Activated B cell treated with CpG ODN at 0.5 μM for 24 hours (primary cell): ENCODE measurements at regions of chr14 and their contacts with region 1.

Region 1: DNA sequence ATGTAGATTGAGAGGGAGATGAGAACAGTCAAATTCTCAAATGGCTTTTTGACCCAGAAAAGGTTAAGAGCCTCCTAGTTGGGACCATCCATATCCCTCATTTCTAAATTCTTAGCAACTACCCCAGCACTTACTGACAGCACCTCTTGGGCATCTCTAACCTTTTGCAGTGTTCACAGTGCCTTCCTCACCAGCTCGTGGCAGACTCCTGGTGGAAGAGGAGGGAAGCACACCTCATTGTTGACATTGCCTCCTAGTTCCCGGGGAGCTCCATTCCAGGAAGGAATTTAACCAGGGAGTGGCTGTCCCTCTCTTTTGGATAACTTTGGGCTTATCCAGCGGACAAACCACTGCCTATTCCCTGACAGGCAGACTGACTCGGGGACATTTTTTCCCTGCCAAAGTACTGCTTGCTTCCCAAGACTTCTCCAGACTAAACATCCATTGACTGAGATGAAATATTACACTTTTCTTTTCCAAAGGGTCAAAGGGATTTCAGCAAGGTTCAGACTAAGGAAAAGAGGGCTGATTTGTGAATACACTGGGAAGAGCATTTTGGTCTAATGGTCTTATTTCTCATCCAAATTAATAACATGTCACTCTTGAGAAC is 9.0 kb upstream of the OR6J1 start:
- DNase-seq: no peak
- ATAC-seq: peak; percentile 78
- H3K4me3 Mint-ChIP-seq: no peak overlapping the region
- H3K27ac Mint-ChIP-seq: no peak overlapping the region
- H3K4me1 Mint-ChIP-seq: no peaks in the 10 kb centered on the region
- H3K27me3 Mint-ChIP-seq: no peaks in the 10 kb centered on the region
- CTCF ChIP-seq: no peak

Region 2: GRCh38 chr14:22314181-22314820 is 338.8 kb before region 1 on chr14:
- CTCF ChIA-PET with region 1: interaction called, 3 read pairs
- POLR2A ChIA-PET with region 1: no interaction called
- intact Hi-C with region 1: loop called (anchors 1 kb)
- DNase-seq: no peak
- ATAC-seq: peak; percentile 95
- H3K4me3 Mint-ChIP-seq: no peak overlapping the region
- H3K27ac Mint-ChIP-seq: no peak overlapping the region
- H3K4me1 Mint-ChIP-seq: no peaks in the 10 kb centered on the region
- H3K27me3 Mint-ChIP-seq: no peaks in the 10 kb centered on the region
- CTCF ChIP-seq: no peak

Region 3: DNA sequence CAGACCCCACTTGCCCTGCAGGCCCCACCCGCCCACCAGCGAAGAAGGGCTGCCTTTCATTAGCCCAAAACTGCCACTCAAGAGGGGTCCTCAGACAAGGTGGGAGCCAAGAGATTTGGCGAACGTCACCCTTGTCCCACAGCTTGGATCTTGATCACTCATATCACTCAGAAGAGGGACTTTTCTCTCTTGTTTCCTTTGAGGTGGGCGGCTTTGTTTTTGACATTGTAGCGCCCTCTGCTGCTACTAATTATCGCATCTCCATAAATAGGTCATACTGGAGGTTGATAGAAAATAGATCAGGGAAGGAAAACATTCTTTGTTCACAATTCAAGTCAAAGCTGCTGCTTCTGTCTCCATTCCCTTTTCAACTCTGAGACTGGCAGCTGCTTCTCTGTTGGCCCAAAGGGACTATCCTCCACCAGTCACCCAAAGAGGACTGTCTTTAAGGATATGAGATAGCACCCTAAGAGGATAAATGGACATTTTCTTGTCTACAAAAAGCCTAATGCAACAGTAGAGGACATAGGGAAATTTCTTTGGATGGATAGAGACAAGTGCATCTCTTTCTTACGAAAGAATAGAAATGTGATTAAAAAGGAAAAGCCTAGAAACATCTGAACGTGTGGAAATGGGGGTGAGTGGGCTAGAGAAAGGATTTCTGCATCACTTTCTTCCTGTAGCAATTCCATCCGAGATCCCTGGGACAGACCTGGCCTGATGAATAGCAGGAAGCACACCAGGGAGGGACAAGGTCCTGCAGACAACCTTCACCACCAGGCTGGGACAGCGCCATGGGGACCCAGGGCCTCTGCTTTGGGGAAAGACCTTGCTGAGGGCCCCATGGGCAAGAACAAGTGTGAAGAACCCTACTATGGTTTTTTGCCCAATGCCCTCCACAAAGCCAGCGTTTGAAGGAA is 179.9 kb before region 1 on chr14:
- CTCF ChIA-PET with region 1: interaction called, 5 read pairs
- POLR2A ChIA-PET with region 1: no interaction called
- intact Hi-C with region 1: loop called (anchors 5 kb)
- DNase-seq: no peak
- ATAC-seq: peak; percentile 64
- H3K4me3 Mint-ChIP-seq: peak overlapping the region; percentile 3
- H3K27ac Mint-ChIP-seq: peak overlapping the region; percentile 65
- H3K4me1 Mint-ChIP-seq: peaks cover 89% of the 10 kb centered on the region
- H3K27me3 Mint-ChIP-seq: no peaks in the 10 kb centered on the region
- CTCF ChIP-seq: peak; percentile 40

Region 4: DNA sequence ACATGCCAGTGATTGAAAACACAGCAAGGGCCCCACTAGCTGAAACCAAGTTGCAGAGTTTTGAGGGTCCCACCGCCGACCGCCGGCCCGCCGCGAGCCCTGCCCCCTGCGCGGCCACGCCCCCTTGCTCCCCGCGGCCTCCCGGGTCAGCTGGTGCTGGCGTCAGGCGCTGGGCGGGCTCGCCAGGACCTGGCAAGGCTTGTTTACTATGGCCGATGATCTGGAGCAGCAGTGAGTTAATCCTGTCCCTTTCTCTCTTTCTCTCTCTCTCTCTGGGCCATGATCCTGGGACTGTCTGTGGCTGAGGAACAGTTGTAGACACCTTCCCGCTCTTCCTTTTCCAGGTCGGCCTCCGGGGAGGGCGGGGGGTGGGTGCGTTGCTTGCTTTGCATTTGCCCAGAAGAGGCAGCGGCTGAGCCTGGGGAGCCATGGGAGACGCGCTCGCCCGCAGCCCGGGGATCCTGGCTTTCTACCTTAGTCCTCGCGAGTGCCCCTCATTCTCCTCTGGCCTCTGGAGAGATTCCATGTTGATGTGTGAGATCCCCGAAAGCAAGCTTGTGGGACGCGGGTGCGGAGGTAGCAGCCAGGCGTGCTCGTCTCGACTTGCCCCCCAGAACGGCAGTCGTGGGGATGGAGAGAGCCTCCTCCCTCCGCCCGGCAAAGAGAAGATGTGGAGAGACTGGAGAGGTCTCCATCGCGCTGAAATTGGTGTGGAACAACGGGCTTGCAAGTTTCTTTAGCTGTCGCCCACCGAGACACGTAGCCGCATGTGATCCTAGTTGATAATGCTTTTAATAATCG is 54.8 kb before region 1 on chr14 and contains the start of gene ABHD4:
- CTCF ChIA-PET with region 1: no interaction called
- POLR2A ChIA-PET with region 1: no interaction called
- intact Hi-C with region 1: loop called (anchors 5 kb)
- DNase-seq: peak; percentile 71
- ATAC-seq: peak; percentile 90
- H3K4me3 Mint-ChIP-seq: peak within 1 kb of the TSS; percentile 95
- H3K27ac Mint-ChIP-seq: peak within 1 kb of the TSS; percentile 88
- H3K4me1 Mint-ChIP-seq: peaks cover 28% of the 10 kb centered on the region
- H3K27me3 Mint-ChIP-seq: peaks cover 2% of the 10 kb centered on the region
- CTCF ChIP-seq: no peak
- total RNA-seq, gene ABHD4: 12.1 and 13.0 TPM in 2 replicates

Region 5: DNA sequence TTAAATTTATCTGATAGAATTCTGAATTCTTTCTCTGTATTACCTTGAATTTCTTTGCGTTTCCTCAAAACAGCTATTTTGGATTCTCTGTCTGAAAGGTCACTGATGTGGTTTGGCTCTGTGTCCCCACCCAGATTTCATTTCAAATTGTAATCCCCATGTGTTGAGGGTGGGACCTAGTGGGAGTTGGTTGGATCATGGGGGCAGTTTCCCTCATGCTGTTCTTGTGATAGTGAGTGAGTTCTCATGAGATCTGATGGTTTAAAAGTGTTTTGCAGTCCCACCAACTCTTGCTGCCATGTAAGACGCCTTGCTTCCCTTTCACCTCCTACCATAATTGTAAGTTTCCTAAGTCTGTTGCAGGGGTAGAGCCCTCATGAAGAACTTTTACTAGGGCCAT is 25.1 kb after region 1 on chr14:
- CTCF ChIA-PET with region 1: no interaction called
- POLR2A ChIA-PET with region 1: no interaction called
- intact Hi-C with region 1: no loop called
- DNase-seq: no peak
- ATAC-seq: no peak
- H3K4me3 Mint-ChIP-seq: no peak overlapping the region
- H3K27ac Mint-ChIP-seq: no peak overlapping the region
- H3K4me1 Mint-ChIP-seq: no peaks in the 10 kb centered on the region
- H3K27me3 Mint-ChIP-seq: peaks cover 34% of the 10 kb centered on the region
- CTCF ChIP-seq: no peak

Region 6: DNA sequence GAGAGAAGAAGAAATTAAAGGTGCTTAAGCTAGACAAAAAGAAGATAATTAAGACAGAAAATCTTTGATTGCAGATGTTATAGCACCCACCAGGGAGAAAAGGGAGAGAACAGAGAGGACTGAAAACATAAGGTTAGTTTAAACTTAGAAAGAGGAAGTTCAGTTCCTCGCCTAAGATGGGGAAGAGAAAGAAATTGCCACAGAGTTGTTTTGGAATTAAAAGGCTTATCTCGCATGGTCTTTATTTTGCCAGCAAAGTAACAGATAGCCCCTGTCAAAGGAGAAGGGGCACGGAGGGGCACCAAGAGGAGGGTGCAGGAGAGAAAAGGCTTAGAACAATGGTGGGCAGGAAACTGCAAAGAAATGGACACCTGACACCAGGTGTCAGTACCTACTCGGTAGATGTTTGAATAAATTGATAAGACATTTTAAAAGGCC is 95.5 kb after region 1 on chr14:
- CTCF ChIA-PET with region 1: no interaction called
- POLR2A ChIA-PET with region 1: no interaction called
- intact Hi-C with region 1: loop called (anchors 10 kb)
- DNase-seq: peak; percentile 24
- ATAC-seq: peak; percentile 78
- H3K4me3 Mint-ChIP-seq: peak overlapping the region; percentile 78
- H3K27ac Mint-ChIP-seq: peak overlapping the region; percentile 99
- H3K4me1 Mint-ChIP-seq: peaks cover 23% of the 10 kb centered on the region
- H3K27me3 Mint-ChIP-seq: no peaks in the 10 kb centered on the region
- CTCF ChIP-seq: no peak

Region 7: GRCh38 chr14:22802860-22803686 is 150.0 kb after region 1 on chr14:
- CTCF ChIA-PET with region 1: no interaction called
- POLR2A ChIA-PET with region 1: interaction called, 14 read pairs
- intact Hi-C with region 1: no loop called
- DNase-seq: no peak
- ATAC-seq: peak; percentile 87
- H3K4me3 Mint-ChIP-seq: peak overlapping the region; percentile 74
- H3K27ac Mint-ChIP-seq: peak overlapping the region; percentile 93
- H3K4me1 Mint-ChIP-seq: peaks cover 81% of the 10 kb centered on the region
- H3K27me3 Mint-ChIP-seq: no peaks in the 10 kb centered on the region
- CTCF ChIP-seq: no peak

Region 8: DNA sequence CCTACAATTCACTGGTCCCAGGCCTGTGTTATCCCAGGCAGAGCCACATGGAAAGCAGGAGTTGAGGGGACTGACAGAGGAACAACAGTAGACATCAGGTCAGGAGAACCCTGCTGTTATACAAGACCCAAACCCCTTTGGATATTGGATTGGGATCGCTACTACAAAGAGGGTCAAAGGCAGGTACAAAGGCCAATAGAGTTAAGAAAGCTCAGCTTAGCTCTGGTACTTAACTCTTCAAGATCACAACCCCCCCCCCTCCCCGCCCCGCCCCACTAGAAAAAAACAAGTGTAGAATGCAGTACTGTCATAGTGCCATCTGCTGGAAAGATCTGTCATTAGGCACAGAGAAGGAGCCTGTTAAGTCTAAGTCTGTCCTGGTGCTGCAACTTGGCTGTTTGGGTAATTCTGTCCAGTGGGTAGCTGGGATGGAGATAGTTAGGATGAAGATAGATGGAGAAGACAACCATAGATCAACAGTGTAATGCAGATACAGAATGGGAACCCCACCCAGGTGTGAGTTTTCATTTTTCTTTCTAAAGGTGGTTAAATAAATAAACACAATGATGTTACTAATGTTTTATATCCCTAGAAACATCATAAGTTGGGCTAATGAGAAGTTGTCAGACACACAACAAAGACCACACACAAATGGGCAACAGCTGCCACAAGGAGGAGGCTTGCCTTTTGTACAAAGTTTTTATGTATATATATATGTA is 247.1 kb after region 1 on chr14:
- CTCF ChIA-PET with region 1: interaction called, 3 read pairs
- POLR2A ChIA-PET with region 1: no interaction called
- intact Hi-C with region 1: loop called (anchors 1 kb)
- DNase-seq: no peak
- ATAC-seq: peak; percentile 91
- H3K4me3 Mint-ChIP-seq: no peak overlapping the region
- H3K27ac Mint-ChIP-seq: peak overlapping the region; percentile 43
- H3K4me1 Mint-ChIP-seq: peaks cover 5% of the 10 kb centered on the region
- H3K27me3 Mint-ChIP-seq: no peaks in the 10 kb centered on the region
- CTCF ChIP-seq: no peak